ENCODE measurements at regions of chr2 and their contacts with region 1.

Region 1: GRCh38 chr2:190017837-190018236 is 44.7 kb downstream of the MSTN start:
- DNase-seq: no peak
- ATAC-seq: no peak
- H3K4me3 ChIP-seq: no peak overlapping the region
- H3K27ac ChIP-seq: no peak overlapping the region
- H3K4me1 ChIP-seq: no peaks in the 10 kb centered on the region
- H3K27me3 ChIP-seq: no peaks in the 10 kb centered on the region
- CTCF ChIP-seq: no peak
- POLR2A ChIP-seq: no peak
- RAD21 ChIP-seq: no peak

Region 2: DNA sequence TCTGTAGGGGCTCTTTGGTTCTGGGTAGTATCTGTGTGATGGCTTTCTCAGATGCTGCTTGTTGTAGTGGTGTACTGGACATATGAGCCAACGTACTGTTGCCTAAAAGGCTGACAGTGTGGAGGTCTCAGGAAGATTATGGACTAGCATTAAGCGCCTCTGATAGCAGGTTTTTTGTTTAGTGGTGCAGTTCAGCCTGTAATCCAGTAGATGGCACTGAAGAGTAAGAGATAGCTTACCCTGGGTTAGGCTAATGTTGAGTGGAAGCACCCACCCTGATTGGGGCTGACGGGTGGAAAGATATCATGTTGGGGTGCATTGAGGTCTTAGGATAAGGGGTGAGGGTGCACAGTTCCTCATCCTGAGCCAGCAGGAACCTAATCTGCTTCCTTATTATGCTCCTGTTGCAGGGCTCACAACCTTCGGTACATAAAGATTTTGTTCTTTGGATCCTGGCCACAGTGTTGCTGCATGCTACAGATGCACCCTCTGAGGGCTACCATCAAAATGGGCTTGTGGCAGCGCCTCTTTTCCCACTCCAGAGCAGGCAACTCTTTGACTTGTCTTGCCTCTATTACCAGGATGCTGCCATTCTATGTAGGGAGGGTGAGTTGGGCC is 35.0 kb before region 1 on chr2:
- CTCF ChIA-PET with region 1: no interaction called
- POLR2A ChIA-PET with region 1: no interaction called
- RAD21 ChIA-PET with region 1: no interaction called
- intact Hi-C with region 1: loop called (anchors 1 kb)
- DNase-seq: no peak
- ATAC-seq: peak; percentile 78
- H3K4me3 ChIP-seq: no peak overlapping the region
- H3K27ac ChIP-seq: no peak overlapping the region
- H3K4me1 ChIP-seq: no peaks in the 10 kb centered on the region
- H3K27me3 ChIP-seq: no peaks in the 10 kb centered on the region
- CTCF ChIP-seq: peak; percentile 13 to 67 (median 60); a peak in 4 of 6 replicates
- POLR2A ChIP-seq: no peak
- RAD21 ChIP-seq: peak; percentile 53

Region 3: DNA sequence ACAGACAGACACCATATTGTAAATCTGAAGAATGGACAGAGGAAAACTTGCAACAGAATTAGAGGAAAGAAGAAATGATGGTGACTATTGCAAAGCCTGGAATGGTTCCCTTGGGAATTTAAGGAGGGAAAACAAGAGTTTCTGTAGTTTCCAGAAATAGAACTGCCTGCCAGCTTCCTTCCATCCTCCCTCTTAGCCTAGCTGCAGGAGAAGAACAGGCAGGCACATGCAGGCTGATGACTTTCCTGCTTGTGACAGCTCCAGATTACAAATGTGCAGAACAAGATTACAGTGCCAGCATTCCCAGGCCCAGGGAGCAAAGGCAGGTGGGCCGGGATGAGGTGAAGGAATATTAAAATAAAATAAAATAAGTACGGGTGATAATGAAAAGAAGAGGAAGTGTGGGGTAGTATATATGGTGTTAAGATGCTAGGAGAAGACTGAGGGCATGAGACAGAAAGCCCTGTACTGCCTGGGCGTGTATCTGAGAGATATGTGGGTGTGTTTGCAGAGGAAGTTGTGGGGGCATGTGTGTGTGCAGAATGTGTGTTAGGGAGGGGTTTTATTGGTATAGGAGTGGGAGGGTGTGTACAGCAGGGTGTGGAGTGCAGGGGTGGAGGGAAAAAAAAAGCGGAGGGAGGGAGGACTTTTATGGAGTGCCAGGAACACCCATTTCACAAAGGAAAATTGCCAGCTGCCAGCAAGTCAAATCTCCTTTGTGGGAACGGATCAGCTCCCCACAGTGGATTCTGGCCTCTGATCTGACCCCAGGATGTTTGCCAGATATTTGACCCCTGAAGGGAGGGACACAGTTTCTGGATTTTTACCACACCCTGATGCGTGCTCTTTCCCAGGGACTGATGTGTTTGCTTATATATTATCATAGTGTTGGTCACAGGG is 560.6 kb after region 1 on chr2:
- CTCF ChIA-PET with region 1: no interaction called
- POLR2A ChIA-PET with region 1: no interaction called
- RAD21 ChIA-PET with region 1: no interaction called
- intact Hi-C with region 1: no loop called
- DNase-seq: peak; percentile 24
- ATAC-seq: peak; percentile 80
- H3K4me3 ChIP-seq: peak overlapping the region in 1 of 2 experiments; percentile 30; a peak in 2 of 4 replicates
- H3K27ac ChIP-seq: peak overlapping the region; percentile 12; the same call in 1 of the 2 replicates
- H3K4me1 ChIP-seq: peaks cover 15 to 41% of the 10 kb centered on the region in 2 experiments
- H3K27me3 ChIP-seq: no peaks in the 10 kb centered on the region
- CTCF ChIP-seq: no peak
- POLR2A ChIP-seq: no peak
- RAD21 ChIP-seq: no peak

Measured in HCT116 (cell line).